ENCODE measurements at regions of chr6 and their contacts with region 1.

Region 1: DNA sequence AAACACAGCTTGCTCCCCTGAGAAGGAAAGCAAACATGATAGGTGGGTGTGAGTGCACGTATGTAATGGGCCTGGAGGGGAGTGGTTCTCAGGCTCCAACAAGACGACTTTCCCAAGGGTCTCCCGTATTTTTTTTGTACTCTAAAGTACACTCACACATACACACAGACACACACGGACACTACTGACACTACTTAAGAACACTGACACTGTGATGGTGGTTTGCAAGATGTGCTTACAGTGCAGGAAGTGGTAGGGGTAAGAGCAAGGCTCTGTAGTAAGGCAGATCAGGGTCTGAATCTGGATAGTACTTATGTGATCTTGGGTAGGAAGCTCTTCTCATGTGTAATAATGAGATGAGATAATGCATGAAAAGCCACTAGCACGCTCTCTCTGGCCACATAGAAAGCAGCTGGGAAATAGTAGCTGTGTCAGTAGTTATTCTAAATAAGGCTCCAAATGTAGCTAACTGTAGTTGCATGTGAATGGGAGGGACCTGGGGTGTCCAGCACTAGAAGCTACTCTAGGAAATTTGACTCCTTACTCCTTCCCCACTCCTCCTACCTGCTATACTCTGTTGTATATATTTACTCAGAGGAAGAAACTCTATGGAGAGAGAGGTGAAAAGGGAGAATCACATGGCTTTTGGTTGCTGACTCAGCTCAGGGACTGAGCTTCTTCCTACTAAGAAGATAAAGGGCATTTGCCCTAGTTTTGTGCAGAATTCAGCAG is 8.4 kb upstream of the ZBTB24 start:
- DNase-seq: no peak
- ATAC-seq: peak; percentile 89
- H3K4me3 ChIP-seq: no peak overlapping the region
- H3K27ac ChIP-seq: no peak overlapping the region
- H3K4me1 ChIP-seq: no peaks in the 10 kb centered on the region
- H3K27me3 ChIP-seq: no peaks in the 10 kb centered on the region; a peak in 1 of 4 replicates
- CTCF ChIP-seq: no peak
- EP300 ChIP-seq: no peak
- POLR2A ChIP-seq: no peak
- RAD21 ChIP-seq: no peak

Region 2: GRCh38 chr6:108651340-108652227 is 839.8 kb before region 1 on chr6:
- CTCF ChIA-PET with region 1: no interaction called
- POLR2A ChIA-PET with region 1: interaction called, 10 read pairs
- RAD21 ChIA-PET with region 1: no interaction called
- SMC1A ChIA-PET with region 1: no interaction called
- in situ Hi-C with region 1: no loop called
- intact Hi-C with region 1: no loop called
- DNase-seq: no peak
- ATAC-seq: no peak
- H3K4me3 ChIP-seq: no peak overlapping the region
- H3K27ac ChIP-seq: no peak overlapping the region
- H3K4me1 ChIP-seq: no peaks in the 10 kb centered on the region
- H3K27me3 ChIP-seq: no peaks in the 10 kb centered on the region
- CTCF ChIP-seq: no peak
- EP300 ChIP-seq: no peak
- POLR2A ChIP-seq: no peak
- RAD21 ChIP-seq: no peak

Region 3: DNA sequence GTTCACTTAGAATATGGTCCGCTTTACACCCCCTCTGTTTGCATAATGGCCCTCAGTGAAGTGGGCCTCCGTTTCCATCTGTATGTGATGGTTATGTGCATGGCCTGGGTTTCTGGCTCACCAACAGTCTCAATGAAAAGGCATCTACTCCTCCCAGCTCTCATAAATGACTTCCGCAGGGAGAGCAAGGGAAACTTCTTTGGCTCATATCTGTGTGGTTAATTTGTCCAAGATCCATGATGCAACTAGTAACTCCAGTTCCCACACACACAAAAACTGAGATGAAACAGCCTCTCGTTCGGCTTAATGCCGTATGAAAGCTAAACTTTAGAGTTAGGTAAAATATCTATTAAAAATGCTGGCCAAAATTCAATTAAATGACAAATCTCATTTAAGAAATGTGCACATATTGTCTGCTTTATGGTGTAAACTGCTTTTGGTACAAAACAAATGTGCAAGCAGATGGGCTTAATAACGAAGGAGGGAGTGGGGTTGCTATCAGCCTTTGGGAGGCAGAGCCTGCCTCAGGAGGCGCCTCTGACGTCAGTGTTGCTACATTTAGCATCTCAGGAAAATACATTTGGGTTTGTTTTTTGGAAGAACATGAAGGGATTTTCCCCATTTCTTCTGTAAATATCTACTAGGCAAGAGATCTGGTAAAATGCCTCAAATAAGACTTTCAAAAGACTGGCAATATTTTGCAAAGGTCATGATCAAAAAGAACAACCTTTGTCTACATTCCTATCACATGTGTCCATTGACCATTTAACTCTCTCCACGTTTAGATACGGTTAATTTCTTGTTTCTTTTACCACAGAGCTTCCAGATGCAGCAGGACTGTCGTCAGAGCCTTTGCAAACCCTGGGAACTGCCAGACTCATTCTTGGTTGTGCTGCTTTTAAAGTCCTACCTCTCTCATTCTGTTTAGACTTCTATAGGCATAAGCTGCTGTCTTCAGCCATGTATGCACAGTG is 546.4 kb before region 1 on chr6:
- CTCF ChIA-PET with region 1: no interaction called
- POLR2A ChIA-PET with region 1: no interaction called
- RAD21 ChIA-PET with region 1: no interaction called
- SMC1A ChIA-PET with region 1: no interaction called
- in situ Hi-C with region 1: no loop called
- intact Hi-C with region 1: no loop called
- DNase-seq: no peak
- ATAC-seq: no peak
- H3K4me3 ChIP-seq: no peak overlapping the region
- H3K27ac ChIP-seq: no peak overlapping the region
- H3K4me1 ChIP-seq: no peaks in the 10 kb centered on the region
- H3K27me3 ChIP-seq: peaks cover 2 to 18% of the 10 kb centered on the region in 2 experiments; a peak in 3 of 4 replicates
- CTCF ChIP-seq: no peak
- EP300 ChIP-seq: no peak
- POLR2A ChIP-seq: no peak
- RAD21 ChIP-seq: no peak

Region 4: GRCh38 chr6:109406196-109406595 is 85.2 kb before region 1 on chr6:
- CTCF ChIA-PET with region 1: no interaction called
- POLR2A ChIA-PET with region 1: no interaction called
- RAD21 ChIA-PET with region 1: no interaction called
- SMC1A ChIA-PET with region 1: no interaction called
- in situ Hi-C with region 1: no loop called
- intact Hi-C with region 1: no loop called
- DNase-seq: no peak
- ATAC-seq: no peak
- H3K4me3 ChIP-seq: no peak overlapping the region
- H3K27ac ChIP-seq: no peak overlapping the region
- H3K4me1 ChIP-seq: no peaks in the 10 kb centered on the region
- H3K27me3 ChIP-seq: no peaks in the 10 kb centered on the region; a peak in 1 of 4 replicates
- CTCF ChIP-seq: no peak
- EP300 ChIP-seq: no peak
- POLR2A ChIP-seq: no peak
- RAD21 ChIP-seq: no peak

Measured in GM12878 (cell line).